ENCODE measurements at regions of chr9 and their contacts with region 1.

Region 1: DNA sequence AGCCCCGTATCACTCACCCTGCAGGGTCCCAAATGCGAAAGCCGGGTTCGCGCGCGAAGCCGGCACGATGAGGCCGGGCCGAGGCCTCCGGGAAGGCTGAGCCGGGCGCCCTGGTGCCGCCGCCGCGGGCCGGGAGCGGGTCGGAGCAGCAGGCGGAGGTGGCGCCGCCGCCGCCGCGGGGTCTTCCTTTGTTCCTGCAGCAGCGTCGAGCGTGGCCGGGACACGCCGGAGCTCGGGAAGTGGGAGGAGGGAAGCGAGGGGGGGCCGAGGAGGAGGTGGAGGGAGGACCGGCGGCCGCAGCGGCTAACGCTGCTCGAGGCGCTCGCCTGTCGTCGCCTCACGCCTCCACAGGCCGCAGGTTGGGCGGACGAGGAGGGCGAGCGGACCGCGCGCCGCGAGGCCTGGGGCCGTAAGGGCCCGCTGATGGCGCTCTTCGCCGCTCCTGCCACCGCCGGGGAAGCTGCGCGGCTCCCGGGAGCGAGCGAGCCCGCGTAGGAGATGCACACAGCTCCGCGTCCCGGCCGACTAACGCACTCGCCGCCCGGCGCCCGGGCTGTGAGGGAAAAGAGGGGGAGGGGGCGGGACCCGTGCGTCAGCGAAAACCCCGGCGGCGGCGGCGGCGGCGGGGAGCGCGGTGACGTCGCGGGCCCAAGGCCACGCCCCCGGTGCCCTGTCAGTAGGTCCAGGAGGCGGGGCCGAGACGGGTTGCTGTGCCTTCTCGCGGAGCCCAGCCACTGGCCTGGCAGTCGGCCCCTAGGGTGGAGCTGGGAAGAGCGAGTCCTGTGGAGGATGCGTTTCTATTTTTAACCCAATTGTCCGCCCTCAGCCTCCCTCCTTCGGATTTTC is at the start of gene ZFAND5:
- H3K4me3 ChIP-seq: peak within 1 kb of the TSS; percentile 85
- H3K27ac ChIP-seq: peak within 1 kb of the TSS; percentile 97
- H3K4me1 ChIP-seq: peaks cover 13% of the 10 kb centered on the region
- CTCF ChIP-seq: peak; percentile 54; the same call in 1 of the 2 replicates

Region 2: GRCh38 chr9:72140582-72140981 is 224.3 kb before region 1 on chr9:
- CTCF ChIA-PET with region 1: no interaction called
- POLR2A ChIA-PET with region 1: no interaction called
- H3K4me3 ChIP-seq: no peak overlapping the region
- H3K27ac ChIP-seq: no peak overlapping the region
- H3K4me1 ChIP-seq: no peaks in the 10 kb centered on the region
- CTCF ChIP-seq: no peak

Region 3: DNA sequence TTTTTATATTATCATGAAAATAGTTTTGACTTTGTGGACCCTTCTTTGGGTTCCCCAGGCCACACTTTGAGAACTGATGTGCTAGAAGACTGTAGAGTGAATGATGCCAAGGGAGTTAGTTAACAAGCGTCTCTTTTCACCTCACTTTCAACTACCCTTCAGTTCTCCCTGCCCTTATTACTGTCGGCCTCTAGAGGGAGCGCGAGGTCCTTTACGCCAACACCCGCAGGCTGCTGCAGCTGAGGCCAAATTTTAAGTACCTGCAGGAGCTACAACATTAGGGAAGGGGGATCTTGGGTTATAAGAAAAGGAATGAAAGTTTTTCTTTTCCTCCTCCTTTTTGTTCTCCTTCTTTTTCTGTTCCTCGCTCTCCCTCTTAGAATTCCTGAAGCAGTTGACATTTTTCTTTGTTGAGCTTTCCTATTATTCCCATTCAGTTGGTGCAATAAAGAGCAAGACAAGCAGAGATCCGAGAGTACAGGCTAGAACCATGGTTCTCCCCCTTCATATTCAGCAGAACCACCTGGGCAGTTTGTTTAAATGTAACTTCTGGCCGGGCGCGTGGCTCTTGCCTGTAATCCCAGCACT is 83.9 kb before region 1 on chr9:
- CTCF ChIA-PET with region 1: interaction called, 12 read pairs
- POLR2A ChIA-PET with region 1: interaction called, 13 read pairs
- H3K4me3 ChIP-seq: no peak overlapping the region
- H3K27ac ChIP-seq: no peak overlapping the region
- H3K4me1 ChIP-seq: no peaks in the 10 kb centered on the region
- CTCF ChIP-seq: peak; percentile 59; the same call in 1 of the 2 replicates

Region 4: DNA sequence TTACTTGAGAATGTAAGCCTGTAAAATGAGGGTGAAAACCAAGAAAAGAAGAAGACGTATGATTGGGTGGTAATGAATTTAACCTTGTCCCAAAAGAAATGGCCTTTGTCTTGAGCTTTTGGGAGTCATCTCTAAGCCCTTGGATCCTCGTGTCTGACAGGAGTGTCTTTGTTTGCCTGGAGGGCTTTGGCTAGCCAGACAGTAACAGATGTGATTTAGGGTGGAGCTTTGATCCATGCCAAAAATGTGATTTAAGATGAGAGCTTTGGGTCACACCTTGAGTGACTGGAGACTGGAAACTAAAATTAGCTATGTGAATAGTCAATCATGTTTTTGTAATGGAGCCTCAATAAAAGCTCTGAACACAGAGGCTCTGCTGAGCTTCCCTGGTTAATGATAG is 26.0 kb after region 1 on chr9:
- CTCF ChIA-PET with region 1: interaction called, 3 read pairs
- POLR2A ChIA-PET with region 1: interaction called, 11 read pairs
- H3K4me3 ChIP-seq: no peak overlapping the region
- H3K27ac ChIP-seq: no peak overlapping the region
- H3K4me1 ChIP-seq: peaks cover under 1% of the 10 kb centered on the region; the same call in 1 of the 2 replicates
- CTCF ChIP-seq: no peak

Region 5: GRCh38 chr9:72476617-72477375 is 111.9 kb after region 1 on chr9:
- CTCF ChIA-PET with region 1: interaction called, 3 read pairs
- POLR2A ChIA-PET with region 1: interaction called, 24 read pairs
- H3K4me3 ChIP-seq: no peak overlapping the region
- H3K27ac ChIP-seq: no peak overlapping the region
- H3K4me1 ChIP-seq: peaks cover 9% of the 10 kb centered on the region
- CTCF ChIP-seq: no peak

Region 6: GRCh38 chr9:72592502-72593403 is 227.9 kb after region 1 on chr9:
- CTCF ChIA-PET with region 1: interaction called, 8 read pairs
- POLR2A ChIA-PET with region 1: interaction called, 10 read pairs
- H3K4me3 ChIP-seq: no peak overlapping the region
- H3K27ac ChIP-seq: no peak overlapping the region
- H3K4me1 ChIP-seq: no peaks in the 10 kb centered on the region
- CTCF ChIP-seq: 0 out of 2 replicates have a peak, but pooled peaks have one; percentile 6